GM12878 (cell line): ENCODE measurements at regions of chr6 and their contacts with region 1.

Region 1: DNA sequence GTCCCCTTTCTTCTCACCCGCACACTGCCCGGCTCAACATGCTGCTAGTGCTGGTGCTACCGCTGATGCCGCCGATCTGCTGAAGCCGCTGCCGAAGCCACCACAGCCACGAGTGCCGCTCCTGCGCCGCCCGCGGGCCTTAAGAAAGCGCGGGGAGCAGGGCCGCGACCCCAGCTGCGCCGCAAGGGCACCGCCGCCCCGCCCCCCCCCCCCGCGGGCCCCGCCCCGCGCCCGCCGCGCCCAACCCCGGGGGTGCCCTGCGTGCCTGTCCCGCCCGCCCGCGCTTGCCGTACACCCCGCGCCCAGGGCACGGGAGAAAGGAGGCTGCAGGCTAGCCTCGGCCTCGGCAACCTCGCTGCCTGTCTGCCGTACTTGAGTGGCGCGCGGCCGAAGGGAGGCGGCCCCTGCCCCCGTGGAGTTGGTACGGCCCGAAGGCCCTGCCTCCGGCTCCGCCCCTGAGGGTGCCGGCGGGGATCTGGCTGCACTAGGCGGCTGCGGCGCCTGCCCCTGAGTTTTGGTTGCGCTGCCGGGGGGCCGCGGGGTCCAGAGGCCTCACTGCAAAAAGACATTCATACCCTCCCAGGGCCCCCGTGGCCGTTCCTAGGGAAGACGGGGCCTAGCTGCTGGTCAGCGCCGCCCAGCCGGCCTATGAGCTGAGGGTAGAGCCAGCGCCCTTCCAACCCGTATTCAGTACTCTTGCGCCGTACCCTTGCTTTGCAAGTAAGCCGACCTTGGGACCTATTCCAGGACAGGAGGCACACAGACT is at the start of gene SOD2:
- DNase-seq: no peak
- ATAC-seq: peak; percentile 86
- H3K4me3 ChIP-seq: peak within 1 kb of the TSS; percentile 78
- H3K27ac ChIP-seq: peak within 1 kb of the TSS; percentile 88
- H3K4me1 ChIP-seq: peaks cover 10% of the 10 kb centered on the region
- H3K27me3 ChIP-seq: no peaks in the 10 kb centered on the region
- CTCF ChIP-seq: peak in 1 of 3 experiments; percentile 5; a peak in 1 of 6 replicates
- EP300 ChIP-seq: no peak
- POLR2A ChIP-seq: peak; percentile 96
- RAD21 ChIP-seq: no peak
- polyA plus RNA-seq, gene SOD2: 12.1 to 20.9 TPM

Region 2: GRCh38 chr6:159616456-159616855 is 76.9 kb before region 1 on chr6:
- CTCF ChIA-PET with region 1: no interaction called
- POLR2A ChIA-PET with region 1: no interaction called
- RAD21 ChIA-PET with region 1: no interaction called
- SMC1A ChIA-PET with region 1: no interaction called
- in situ Hi-C with region 1: no loop called
- intact Hi-C with region 1: no loop called
- DNase-seq: no peak
- ATAC-seq: no peak
- H3K4me3 ChIP-seq: no peak overlapping the region
- H3K27ac ChIP-seq: no peak overlapping the region
- H3K4me1 ChIP-seq: no peaks in the 10 kb centered on the region
- H3K27me3 ChIP-seq: no peaks in the 10 kb centered on the region
- CTCF ChIP-seq: no peak
- EP300 ChIP-seq: no peak
- POLR2A ChIP-seq: no peak
- RAD21 ChIP-seq: no peak

Region 3: DNA sequence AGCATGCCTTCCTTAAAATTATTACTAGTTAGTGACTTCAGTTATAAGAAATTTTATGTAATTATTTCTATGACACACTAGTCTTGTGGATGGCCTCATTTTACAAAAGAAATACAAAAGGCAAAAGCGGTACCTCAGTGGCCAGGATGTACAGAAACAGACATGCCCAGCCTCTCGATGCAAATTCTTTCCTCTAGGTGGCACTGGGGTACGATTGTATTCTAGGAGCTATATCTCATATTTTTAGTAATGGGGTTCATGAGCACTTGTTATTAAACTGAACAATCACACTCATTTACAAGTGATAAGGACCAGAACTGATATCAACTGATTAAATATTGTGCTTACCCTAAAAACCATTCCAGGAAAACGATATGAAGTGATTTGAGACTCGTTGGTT is 60.1 kb before region 1 on chr6:
- CTCF ChIA-PET with region 1: interaction called, 10 read pairs
- POLR2A ChIA-PET with region 1: no interaction called
- RAD21 ChIA-PET with region 1: interaction called, 3 read pairs
- SMC1A ChIA-PET with region 1: no interaction called
- in situ Hi-C with region 1: no loop called
- intact Hi-C with region 1: no loop called
- DNase-seq: no peak
- ATAC-seq: peak; percentile 90
- H3K4me3 ChIP-seq: no peak overlapping the region
- H3K27ac ChIP-seq: no peak overlapping the region
- H3K4me1 ChIP-seq: no peaks in the 10 kb centered on the region
- H3K27me3 ChIP-seq: no peaks in the 10 kb centered on the region
- CTCF ChIP-seq: peak; percentile 43 to 56 (median 53)
- EP300 ChIP-seq: no peak
- POLR2A ChIP-seq: no peak
- RAD21 ChIP-seq: no peak

Region 4: DNA sequence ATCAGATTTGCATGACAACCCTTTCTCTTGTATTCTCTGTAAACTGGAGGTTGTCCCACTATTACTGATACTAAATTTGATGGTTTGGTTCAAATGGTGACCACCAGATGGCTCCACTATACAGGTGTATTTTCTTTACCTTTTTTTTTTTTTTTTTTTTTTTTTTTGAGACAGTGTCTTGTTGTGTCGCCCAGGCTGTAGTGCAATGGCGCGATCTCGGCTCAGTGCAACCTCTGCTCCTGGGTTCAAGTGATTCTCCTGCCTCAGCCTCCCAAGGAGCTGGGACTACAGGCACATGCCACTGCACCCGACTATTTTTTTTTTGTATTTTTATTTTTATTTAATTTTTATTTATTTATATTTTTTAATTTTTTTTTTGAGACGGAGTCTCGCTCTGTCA is 27.4 kb after region 1 on chr6:
- CTCF ChIA-PET with region 1: interaction called, 27 read pairs
- POLR2A ChIA-PET with region 1: interaction called, 16 read pairs
- RAD21 ChIA-PET with region 1: interaction called, 6 read pairs
- SMC1A ChIA-PET with region 1: interaction called, 15 read pairs
- in situ Hi-C with region 1: no loop called
- intact Hi-C with region 1: no loop called
- DNase-seq: no peak
- ATAC-seq: peak; percentile 71
- H3K4me3 ChIP-seq: no peak overlapping the region
- H3K27ac ChIP-seq: no peak overlapping the region
- H3K4me1 ChIP-seq: no peaks in the 10 kb centered on the region
- H3K27me3 ChIP-seq: no peaks in the 10 kb centered on the region
- CTCF ChIP-seq: peak; percentile 27 to 49 (median 27); a peak in 4 of 6 replicates
- EP300 ChIP-seq: no peak
- POLR2A ChIP-seq: no peak
- RAD21 ChIP-seq: peak; percentile 59

Region 5: DNA sequence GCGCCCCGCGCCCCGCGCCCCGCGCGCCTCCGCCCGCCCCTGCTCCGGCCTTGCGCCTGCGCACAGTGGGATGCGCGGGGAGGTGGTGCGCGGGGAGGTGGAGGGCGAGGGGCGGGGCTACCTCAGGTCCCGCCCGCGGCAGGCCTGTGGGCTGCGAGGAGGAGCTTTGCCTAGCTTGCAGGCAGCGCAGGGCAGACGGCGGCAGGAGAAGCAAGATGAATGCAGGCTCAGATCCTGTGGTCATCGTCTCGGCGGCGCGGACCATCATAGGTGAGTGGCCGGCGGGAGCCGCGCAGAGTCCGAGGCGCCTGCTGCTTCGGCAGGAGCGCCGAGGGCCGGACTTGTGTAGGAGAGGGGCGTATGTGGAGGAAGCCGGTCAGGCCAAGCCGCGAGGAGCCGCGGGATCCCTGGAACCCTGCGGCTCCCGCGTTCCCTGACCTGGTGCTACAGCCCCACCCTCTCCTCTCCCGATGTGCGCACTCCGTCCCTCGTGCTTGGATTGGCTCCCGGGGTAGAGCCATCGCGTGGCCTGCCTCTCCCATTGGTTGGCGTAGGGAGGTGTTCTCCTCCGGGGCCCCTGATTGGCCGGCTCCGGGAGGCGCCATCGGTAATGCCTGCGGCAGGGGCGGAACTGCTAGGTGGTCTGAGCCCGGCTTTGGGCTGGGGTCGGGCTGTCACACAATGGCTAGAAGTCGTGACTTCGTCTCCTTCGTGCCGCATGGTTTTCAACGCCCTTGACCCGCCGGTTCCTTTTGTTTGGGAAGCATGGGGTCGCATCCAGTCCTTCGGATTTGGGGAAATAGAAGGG is 68.8 kb after region 1 on chr6 and contains the start of gene ACAT2:
- CTCF ChIA-PET with region 1: interaction called, 4 read pairs
- POLR2A ChIA-PET with region 1: interaction called, 10 read pairs
- RAD21 ChIA-PET with region 1: interaction called, 3 read pairs
- SMC1A ChIA-PET with region 1: interaction called, 6 read pairs
- in situ Hi-C with region 1: no loop called
- intact Hi-C with region 1: loop called (anchors 2 kb)
- DNase-seq: peak; percentile 78
- ATAC-seq: peak; percentile 98
- H3K4me3 ChIP-seq: peak within 1 kb of the TSS; percentile 93
- H3K27ac ChIP-seq: peak within 1 kb of the TSS; percentile 96
- H3K4me1 ChIP-seq: peaks cover 5% of the 10 kb centered on the region
- H3K27me3 ChIP-seq: no peaks in the 10 kb centered on the region
- CTCF ChIP-seq: 0 out of 6 replicates have a peak, but pooled peaks of 1 of the 3 experiments have one; percentile 4
- EP300 ChIP-seq: no peak
- POLR2A ChIP-seq: peak; percentile 88
- RAD21 ChIP-seq: no peak
- polyA plus RNA-seq, gene ACAT2: 249 to 257 TPM

Region 6: GRCh38 chr6:159842035-159842434 is 148.7 kb after region 1 on chr6:
- CTCF ChIA-PET with region 1: no interaction called
- POLR2A ChIA-PET with region 1: no interaction called
- RAD21 ChIA-PET with region 1: no interaction called
- SMC1A ChIA-PET with region 1: no interaction called
- in situ Hi-C with region 1: no loop called
- intact Hi-C with region 1: no loop called
- DNase-seq: no peak
- ATAC-seq: peak; percentile 72
- H3K4me3 ChIP-seq: no peak overlapping the region
- H3K27ac ChIP-seq: no peak overlapping the region
- H3K4me1 ChIP-seq: no peaks in the 10 kb centered on the region
- H3K27me3 ChIP-seq: no peaks in the 10 kb centered on the region
- CTCF ChIP-seq: peak in 1 of 3 experiments; percentile 15; a peak in 1 of 6 replicates
- EP300 ChIP-seq: no peak
- POLR2A ChIP-seq: no peak
- RAD21 ChIP-seq: 0 out of 2 replicates have a peak, but pooled peaks have one; percentile 15

Region 7: GRCh38 chr6:159852877-159853276 is 159.6 kb after region 1 on chr6:
- CTCF ChIA-PET with region 1: interaction called, 20 read pairs
- POLR2A ChIA-PET with region 1: no interaction called
- RAD21 ChIA-PET with region 1: interaction called, 7 read pairs
- SMC1A ChIA-PET with region 1: interaction called, 18 read pairs
- in situ Hi-C with region 1: no loop called
- intact Hi-C with region 1: loop called (anchors 1 kb)
- DNase-seq: no peak
- ATAC-seq: peak; percentile 66
- H3K4me3 ChIP-seq: no peak overlapping the region
- H3K27ac ChIP-seq: no peak overlapping the region
- H3K4me1 ChIP-seq: no peaks in the 10 kb centered on the region
- H3K27me3 ChIP-seq: no peaks in the 10 kb centered on the region; a peak in 2 of 4 replicates
- CTCF ChIP-seq: peak in 2 of 3 experiments; percentile 34 to 50; a peak in 3 of 6 replicates
- EP300 ChIP-seq: no peak
- POLR2A ChIP-seq: no peak
- RAD21 ChIP-seq: peak; percentile 53

Region 8: DNA sequence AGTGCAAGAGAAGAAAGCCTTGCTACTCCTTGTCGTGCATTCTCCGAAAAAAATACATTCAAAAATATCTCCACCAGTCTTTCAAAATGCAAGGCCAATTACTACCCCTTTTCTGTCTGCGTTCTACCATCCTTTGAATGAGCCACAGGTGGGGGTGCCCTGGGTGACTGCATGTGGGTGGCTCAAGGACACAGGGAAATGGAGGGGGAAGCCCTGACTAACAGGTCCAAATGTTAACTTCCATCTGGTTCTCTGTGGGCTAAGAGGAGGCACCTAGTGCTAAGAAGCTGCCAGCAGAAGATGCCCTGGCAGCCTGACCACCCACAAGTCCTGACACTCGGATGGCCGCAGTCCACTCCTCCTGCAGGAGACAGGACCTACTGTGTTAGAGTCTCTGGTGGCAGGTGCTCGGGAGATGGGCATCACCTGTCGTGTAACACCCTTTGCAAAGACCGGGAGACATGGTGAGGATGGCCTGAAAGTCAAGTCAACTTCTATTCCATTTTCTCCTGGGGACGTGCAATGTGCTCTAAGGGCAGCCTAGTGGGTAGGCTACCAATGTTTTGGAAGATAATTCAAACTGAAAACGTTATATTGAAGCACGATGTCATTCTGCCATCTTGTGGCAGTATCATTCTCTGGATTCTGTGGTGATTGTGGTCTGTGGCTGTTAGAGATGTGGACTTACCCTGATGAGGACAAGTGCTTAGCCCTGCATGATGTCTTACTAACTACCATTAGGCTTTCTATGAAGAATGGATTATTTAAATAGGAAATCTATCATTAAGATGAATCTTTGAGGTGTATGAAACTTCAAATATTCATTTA is 248.2 kb after region 1 on chr6:
- CTCF ChIA-PET with region 1: interaction called, 6 read pairs
- POLR2A ChIA-PET with region 1: no interaction called
- RAD21 ChIA-PET with region 1: interaction called, 4 read pairs
- SMC1A ChIA-PET with region 1: interaction called, 6 read pairs
- in situ Hi-C with region 1: no loop called
- intact Hi-C with region 1: loop called (anchors 2 kb)
- DNase-seq: peak; percentile 55
- ATAC-seq: peak; percentile 98
- H3K4me3 ChIP-seq: no peak overlapping the region
- H3K27ac ChIP-seq: no peak overlapping the region
- H3K4me1 ChIP-seq: no peaks in the 10 kb centered on the region
- H3K27me3 ChIP-seq: no peaks in the 10 kb centered on the region
- CTCF ChIP-seq: peak; percentile 47 to 81 (median 56); a peak in 4 of 6 replicates
- EP300 ChIP-seq: no peak
- POLR2A ChIP-seq: no peak
- RAD21 ChIP-seq: peak; percentile 89